Activated naive CD8-positive, alpha-beta T cell treated with anti-CD3 and anti-CD28 coated beads, Interleukin-2, amount 10 ng/mL, durations not matched to agents 7 days and 5 days (primary cell): ENCODE measurements at regions of chr5 and their contacts with region 1.

Region 1: GRCh38 chr5:14644623-14645237 is 19.8 kb upstream of the OTULIN start:
- DNase-seq: no peak
- ATAC-seq: no peak
- H3K4me3 Mint-ChIP-seq: no peak overlapping the region
- H3K27ac Mint-ChIP-seq: no peak overlapping the region
- H3K4me1 Mint-ChIP-seq: peaks cover 12% of the 10 kb centered on the region
- H3K27me3 Mint-ChIP-seq: peaks cover 16% of the 10 kb centered on the region

Region 2: DNA sequence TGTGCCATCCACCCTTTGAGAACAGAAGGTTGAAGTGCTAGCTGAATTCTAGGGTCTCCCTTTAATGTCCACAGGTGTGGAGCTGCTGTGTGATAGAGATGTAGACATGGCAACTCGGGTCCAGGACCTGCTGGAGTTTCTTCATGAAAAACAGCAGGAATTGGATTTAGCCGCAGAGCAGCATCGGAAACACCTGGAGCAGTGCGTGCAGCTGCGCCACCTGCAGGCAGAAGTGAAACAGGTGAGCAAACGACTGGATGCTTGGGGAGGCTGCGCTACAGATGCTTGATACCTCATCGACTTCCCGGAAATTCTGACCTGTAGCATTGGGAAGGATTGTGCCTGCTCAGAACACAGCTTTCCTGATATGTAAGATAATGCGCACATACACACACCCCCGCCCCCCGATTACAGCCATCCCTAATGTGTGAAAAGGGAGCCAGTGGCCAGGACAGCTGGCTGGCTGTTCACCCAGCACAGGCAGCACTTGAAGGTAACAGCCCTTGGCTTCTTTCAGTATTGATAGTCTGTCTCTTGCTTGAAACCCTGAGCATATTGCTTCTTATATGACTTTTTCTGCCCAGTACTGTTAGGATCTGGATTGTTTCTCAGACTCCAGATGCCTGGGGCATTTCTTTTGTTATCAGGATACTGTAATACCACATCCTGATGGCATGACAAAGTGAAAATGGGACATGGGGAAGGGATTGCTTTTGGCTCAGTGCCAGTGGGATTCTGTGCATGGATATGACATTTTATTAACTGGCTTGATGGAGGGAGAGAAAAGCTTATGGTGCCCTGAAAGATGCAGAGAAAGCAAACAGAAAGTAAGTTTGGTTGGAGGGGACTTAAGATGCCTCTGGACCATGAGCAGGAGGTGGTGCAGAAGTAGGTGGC is 279.9 kb before region 1 on chr5:
- POLR2A ChIA-PET with region 1: interaction called, 27 read pairs
- DNase-seq: no peak
- ATAC-seq: no peak
- H3K4me3 Mint-ChIP-seq: peak overlapping the region; percentile 56
- H3K27ac Mint-ChIP-seq: peak overlapping the region; percentile 89
- H3K4me1 Mint-ChIP-seq: peaks cover 52% of the 10 kb centered on the region
- H3K27me3 Mint-ChIP-seq: peaks cover 2% of the 10 kb centered on the region